Colonic mucosa (tissue), 4 donors: ENCODE measurements at regions of chr2 and their contacts with region 1.

Region 1: DNA sequence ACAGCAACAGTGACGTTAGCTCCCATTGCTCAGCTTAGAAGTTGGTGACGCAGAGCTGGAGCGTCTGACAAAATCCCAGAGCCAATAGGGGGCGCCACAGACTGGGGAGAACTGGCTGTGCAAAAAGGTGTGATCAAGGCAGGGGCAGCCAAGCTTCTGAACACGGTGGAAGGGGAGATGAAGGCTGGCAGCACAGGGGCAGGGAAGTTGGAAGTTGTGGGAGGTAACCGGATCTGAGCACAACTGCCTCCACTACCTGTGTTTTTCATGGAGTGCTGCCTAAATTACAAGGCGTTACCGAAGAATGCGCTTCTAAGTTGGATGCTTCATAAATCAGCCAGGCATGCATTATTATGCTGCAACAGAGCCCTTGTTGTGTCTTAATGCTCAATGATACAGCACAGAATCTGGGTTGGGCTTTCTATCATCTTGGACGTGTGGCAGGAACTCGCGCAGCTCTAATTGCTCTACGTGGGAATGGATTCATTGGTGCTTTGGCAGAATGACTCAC is 370.0 kb downstream of the SLC4A3 start:
- DNase-seq: peak; percentile 23
- H3K4me3 ChIP-seq: no peak overlapping the region
- H3K27ac ChIP-seq: no peak overlapping the region
- H3K4me1 ChIP-seq: no peaks in the 10 kb centered on the region
- H3K27me3 ChIP-seq: no peaks in the 10 kb centered on the region
- CTCF ChIP-seq: no peak

Region 2: DNA sequence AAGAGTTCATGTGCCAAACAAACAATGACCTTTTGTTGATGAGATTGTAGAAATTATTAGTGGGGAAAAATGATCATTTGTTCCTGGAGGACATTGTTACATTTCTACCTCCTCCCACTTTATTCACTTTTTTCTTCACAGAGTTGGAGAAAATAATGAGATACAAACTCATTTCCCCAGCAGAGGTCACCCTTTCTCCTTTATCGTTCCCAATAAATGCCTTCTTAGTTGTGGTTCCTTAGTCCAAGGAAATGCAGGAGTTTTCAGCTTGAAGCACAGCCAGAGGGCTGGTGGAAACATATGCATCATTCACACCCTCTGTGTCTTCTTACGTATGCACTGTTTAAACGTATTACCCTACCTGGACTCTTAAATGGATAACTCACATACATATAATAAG is 261.2 kb before region 1 on chr2:
- intact Hi-C with region 1: loop called (anchors 5 kb)
- DNase-seq: peak; percentile 22
- H3K4me3 ChIP-seq: no peak overlapping the region
- H3K27ac ChIP-seq: no peak overlapping the region
- H3K4me1 ChIP-seq: no peaks in the 10 kb centered on the region
- H3K27me3 ChIP-seq: no peaks in the 10 kb centered on the region
- CTCF ChIP-seq: no peak

Region 3: GRCh38 chr2:219901155-219901554 is 96.2 kb before region 1 on chr2:
- intact Hi-C with region 1: no loop called
- DNase-seq: no peak
- H3K4me3 ChIP-seq: no peak overlapping the region
- H3K27ac ChIP-seq: no peak overlapping the region
- H3K4me1 ChIP-seq: no peaks in the 10 kb centered on the region
- H3K27me3 ChIP-seq: no peaks in the 10 kb centered on the region
- CTCF ChIP-seq: no peak